Heart right ventricle (tissue), 16 donors: ENCODE measurements at regions of chr14 and their contacts with region 1.

Region 1: DNA sequence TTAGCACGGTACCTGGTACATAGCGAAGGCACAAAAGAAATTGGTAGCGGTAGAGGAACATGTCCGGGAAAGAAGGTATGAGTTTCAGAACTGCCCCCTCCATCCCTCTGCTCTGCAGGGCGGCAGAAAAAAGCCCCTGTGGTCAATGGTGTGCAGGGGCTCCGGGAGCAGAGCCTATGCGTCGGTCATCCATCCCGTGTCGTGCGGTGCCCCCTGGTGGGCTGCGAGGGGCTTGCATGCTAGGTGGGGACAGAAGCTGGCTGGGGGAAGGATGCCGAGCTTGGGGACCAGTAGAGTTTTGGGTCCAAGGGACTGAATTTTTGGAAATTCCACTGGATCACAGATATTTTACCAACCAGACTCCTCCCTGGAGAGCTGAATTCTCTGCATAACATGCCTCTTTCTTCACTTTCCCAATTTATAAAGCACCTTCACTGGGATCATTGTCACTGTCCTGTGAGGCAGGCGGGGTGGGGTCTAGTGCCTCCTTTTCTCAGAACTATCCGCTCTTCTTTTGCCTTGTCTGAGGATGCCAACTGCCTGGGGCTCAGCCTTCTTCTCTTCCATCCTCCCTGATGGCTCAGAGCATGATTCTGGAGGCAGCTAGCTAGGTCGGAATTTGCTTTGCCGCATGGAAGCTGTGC is 148.7 kb downstream of the SMOC1 start:
- DNase-seq: peak; percentile 60 to 77
- ATAC-seq: peak; percentile 64 to 80 (median 76)
- H3K4me3 ChIP-seq: no peak overlapping the region
- H3K27ac ChIP-seq: no peak overlapping the region
- H3K4me1 ChIP-seq: no peaks in the 10 kb centered on the region
- H3K27me3 ChIP-seq: peaks cover 0 to 13% (median 11%) of the 10 kb centered on the region in 7 donors
- CTCF ChIP-seq: peak; percentile 73 to 96 (median 89)

Region 2: DNA sequence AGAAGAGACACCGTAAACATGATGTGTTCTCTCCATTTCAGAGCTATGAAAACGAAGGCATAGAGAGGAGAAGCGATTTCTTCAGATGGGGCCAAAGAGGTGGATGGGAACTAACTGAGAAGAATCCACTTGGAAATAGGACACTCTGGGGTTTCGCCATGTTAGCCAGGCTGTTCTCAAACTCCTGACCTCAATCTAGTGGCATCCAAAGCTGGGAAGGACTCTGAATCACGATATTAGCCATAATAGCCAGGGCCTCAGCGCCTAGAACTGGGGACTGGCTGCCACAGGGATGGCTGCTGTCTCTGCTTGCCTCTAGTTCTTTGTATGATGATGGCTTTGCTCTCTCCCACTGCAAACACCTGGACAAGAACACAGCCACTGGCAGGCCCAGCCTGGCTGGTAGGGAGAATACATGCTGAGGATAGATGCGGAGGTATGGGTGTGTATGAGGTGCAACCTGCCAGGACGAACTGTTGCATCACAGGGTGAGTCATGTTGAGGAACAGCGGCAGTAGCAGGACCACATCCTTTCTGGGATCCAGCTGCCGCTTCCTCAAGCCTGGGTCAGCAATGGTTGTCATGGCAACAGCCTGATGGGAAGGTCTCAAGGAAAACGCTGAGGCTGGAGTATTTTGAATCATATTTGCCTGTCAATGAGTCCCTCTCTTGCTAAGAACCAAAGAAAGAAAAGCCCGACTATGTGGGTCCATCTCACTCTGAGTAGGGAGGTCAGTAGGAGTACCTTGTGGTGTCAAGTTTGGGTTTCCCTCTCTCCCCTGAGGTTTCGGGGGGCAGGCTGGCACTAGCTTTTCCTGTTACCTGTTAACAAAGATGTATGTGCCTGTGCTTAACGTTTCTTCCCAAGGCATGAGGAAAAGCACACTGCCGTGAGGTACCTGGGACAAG is 484.3 kb before region 1 on chr14:
- intact Hi-C with region 1: loop called in 1 of 10 experiments (anchors 10 kb)
- DNase-seq: peak in 1 of 2 donors; percentile 11
- ATAC-seq: peak in 2 of 8 donors; percentile 49 to 59
- H3K4me3 ChIP-seq: no peak overlapping the region
- H3K27ac ChIP-seq: no peak overlapping the region
- H3K4me1 ChIP-seq: peaks cover 0 to 27% (median 0%) of the 10 kb centered on the region in 9 donors
- H3K27me3 ChIP-seq: peaks cover 0 to 39% (median 21%) of the 10 kb centered on the region in 7 donors
- CTCF ChIP-seq: no peak

Region 3: GRCh38 chr14:69580009-69580577 is 447.8 kb before region 1 on chr14:
- intact Hi-C with region 1: loop called in 2 of 10 experiments (anchors 10 kb)
- DNase-seq: no peak
- ATAC-seq: peak in 6 of 8 donors; percentile 21 to 87 (median 40)
- H3K4me3 ChIP-seq: no peak overlapping the region
- H3K27ac ChIP-seq: no peak overlapping the region
- H3K4me1 ChIP-seq: peaks cover 0 to 8% (median 0%) of the 10 kb centered on the region in 9 donors
- H3K27me3 ChIP-seq: peaks cover 3 to 40% (median 29%) of the 10 kb centered on the region in 7 donors
- CTCF ChIP-seq: peak in 7 of 9 donors; percentile 27 to 51 (median 41)

Region 4: DNA sequence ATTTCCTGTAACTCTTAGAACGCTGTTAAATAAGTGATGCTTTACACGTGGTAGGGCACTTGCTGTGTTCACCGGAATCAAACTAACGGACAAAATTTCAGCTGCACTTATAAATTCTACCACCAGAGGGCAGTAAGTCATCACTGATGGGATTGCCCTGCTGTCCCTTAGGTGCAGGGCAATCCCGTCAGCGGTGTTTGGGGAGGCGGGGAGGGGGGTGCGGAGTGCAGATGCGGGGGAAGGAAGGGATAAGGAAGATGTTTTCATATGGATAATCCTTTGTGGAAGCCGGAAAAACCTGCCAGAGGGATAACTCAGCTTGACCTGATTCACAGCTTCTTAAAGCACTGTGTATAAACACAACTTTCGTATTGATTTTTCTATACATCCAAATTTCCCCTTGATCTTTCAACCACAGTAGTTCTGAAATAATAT is 209.1 kb before region 1 on chr14:
- intact Hi-C with region 1: loop called (anchors 1 to 5 kb)
- DNase-seq: peak in 1 of 2 donors; percentile 48
- ATAC-seq: peak in 7 of 8 donors; percentile 56 to 79 (median 62)
- H3K4me3 ChIP-seq: no peak overlapping the region
- H3K27ac ChIP-seq: no peak overlapping the region
- H3K4me1 ChIP-seq: peaks cover 0 to 4% (median 0%) of the 10 kb centered on the region in 9 donors
- H3K27me3 ChIP-seq: peaks cover 0 to 51% (median 38%) of the 10 kb centered on the region in 7 donors
- CTCF ChIP-seq: peak; percentile 74 to 87 (median 82)

Region 5: DNA sequence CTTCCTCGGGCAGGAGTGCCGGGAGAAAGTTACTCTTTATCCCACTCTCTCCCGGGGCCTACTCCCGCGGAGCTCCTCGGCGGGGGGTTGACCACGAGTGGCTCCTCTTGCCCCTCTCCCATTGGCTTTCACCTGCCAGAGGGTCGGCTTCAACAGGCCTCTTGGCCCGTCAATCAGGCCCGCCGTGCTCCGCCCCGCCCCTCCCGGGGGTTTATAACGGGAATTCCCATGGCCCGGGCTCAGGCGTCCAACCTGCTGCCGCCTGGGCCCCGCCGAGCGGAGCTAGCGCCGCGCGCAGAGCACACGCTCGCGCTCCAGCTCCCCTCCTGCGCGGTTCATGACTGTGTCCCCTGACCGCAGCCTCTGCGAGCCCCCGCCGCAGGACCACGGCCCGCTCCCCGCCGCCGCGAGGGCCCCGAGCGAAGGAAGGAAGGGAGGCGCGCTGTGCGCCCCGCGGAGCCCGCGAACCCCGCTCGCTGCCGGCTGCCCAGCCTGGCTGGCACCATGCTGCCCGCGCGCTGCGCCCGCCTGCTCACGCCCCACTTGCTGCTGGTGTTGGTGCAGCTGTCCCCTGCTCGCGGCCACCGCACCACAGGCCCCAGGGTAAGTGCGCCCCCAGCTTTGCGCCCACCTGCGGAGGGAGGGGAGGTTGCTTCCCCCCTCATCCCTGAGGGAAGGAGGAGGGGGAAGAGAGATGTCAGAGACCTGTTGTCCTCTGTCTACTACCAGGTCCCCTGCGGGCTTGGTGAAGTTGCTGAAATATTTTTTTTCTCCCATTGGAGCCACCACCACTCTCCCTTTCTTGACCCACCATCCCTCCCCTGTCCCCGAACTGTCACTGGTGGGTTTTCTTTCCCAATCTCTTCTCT is 148.5 kb before region 1 on chr14 and contains the start of gene SMOC1:
- intact Hi-C with region 1: loop called in 1 of 10 experiments (anchors 5 kb)
- DNase-seq: peak; percentile 45 to 47
- ATAC-seq: peak; percentile 38 to 85 (median 68)
- H3K4me3 ChIP-seq: peak within 1 kb of the TSS in 7 of 10 donors; percentile 21 to 43 (median 34)
- H3K27ac ChIP-seq: no peak within 1 kb of the TSS
- H3K4me1 ChIP-seq: peaks cover 0 to 8% (median 3%) of the 10 kb centered on the region in 9 donors
- H3K27me3 ChIP-seq: peaks cover 0 to 71% (median 62%) of the 10 kb centered on the region in 7 donors
- CTCF ChIP-seq: no peak
- total RNA-seq, gene SMOC1: 0.15 to 6.8 (median 1.3) TPM